ENCODE measurements at regions of chr1 and their contacts with region 1.

Region 1: GRCh38 chr1:23367791-23368561 is 1.7 kb downstream of the ZNF436 start:
- DNase-seq: peak; percentile 97

Region 2: GRCh38 chr1:23177438-23178380 is 190.3 kb before region 1 on chr1:
- CTCF ChIA-PET with region 1: no interaction called
- POLR2A ChIA-PET with region 1: no interaction called
- DNase-seq: peak; percentile 74

Region 3: GRCh38 chr1:23344111-23344986 is 23.6 kb before region 1 on chr1 and contains the start of gene HNRNPR:
- CTCF ChIA-PET with region 1: interaction called, 4 read pairs
- POLR2A ChIA-PET with region 1: interaction called, 97 read pairs
- DNase-seq: peak; percentile 96

Region 4: GRCh38 chr1:23354245-23354644 is 13.7 kb before region 1 on chr1:
- CTCF ChIA-PET with region 1: no interaction called
- POLR2A ChIA-PET with region 1: interaction called, 12 read pairs
- DNase-seq: no peak

Region 5: DNA sequence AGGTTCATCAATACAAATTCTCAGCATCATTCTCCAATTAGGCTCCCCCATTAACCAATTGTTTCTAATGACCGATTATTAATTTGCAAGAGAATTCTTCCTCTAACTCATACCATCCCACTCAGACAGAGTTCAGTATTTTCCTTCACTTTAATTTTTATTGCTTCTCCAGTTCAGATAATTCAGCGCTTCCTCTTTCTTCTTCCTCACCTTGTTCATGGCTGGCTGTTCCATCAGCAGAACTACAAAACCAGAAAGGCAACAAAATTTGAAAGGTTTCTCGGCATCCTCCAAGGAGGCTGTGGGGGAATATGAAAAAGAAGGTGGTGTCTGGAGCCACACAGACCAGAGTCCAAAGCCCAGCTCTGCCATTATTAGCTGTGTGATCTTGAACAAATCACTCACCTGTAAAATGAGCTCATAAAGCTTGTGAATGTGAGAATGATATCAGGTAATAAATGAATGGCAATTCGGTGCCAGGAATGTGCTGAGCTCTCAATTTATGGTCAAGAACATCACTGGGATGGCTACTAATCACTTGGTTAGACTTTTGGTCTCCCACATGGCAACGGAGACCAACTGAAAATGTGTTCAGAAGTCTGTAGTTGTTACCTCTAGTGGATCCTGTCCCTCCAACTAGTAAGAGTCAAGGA is 13.4 kb after region 1 on chr1:
- CTCF ChIA-PET with region 1: no interaction called
- POLR2A ChIA-PET with region 1: interaction called, 12 read pairs
- DNase-seq: no peak

Region 6: GRCh38 chr1:23403735-23404486 is 35.9 kb after region 1 on chr1:
- CTCF ChIA-PET with region 1: interaction called, 7 read pairs
- POLR2A ChIA-PET with region 1: interaction called, 18 read pairs
- DNase-seq: peak; percentile 89

Measured in HEK293T (cell line).